GM12878 (cell line): ENCODE measurements at regions of chr1 and their contacts with region 1.

Region 1: DNA sequence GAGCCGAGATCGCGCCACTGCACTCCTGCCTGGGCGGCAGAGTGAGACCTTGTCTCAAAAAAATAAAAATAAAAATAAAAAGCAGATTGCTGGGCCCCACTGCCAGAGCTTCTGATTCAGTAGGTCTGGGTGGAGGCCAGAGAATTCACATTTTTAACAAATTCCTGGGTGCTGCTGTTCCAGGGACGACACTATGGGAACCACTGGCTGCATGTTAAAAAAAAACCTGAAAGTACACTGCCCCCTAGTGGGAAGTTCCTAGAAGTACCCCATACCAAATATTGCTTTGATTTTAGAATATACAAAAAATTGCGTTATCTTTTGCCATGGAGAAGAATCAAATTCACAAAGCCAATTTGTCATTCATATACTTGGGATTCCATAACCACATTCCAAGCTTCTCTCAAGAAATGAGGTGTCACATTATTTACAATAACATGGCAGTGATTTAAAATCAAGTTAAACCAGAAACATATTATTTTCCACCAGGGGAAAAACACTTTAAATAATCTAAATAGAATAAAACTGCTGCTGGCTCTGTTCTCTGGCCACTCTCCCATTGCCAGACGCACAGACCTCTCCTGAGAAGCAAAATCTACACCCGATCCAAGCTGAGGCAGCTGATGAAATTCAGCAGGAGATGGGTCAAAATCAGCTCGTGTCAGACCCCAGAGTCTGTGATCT is 27.4 kb downstream of the SYF2 start:
- DNase-seq: no peak
- ATAC-seq: peak; percentile 77
- H3K4me3 ChIP-seq: no peak overlapping the region
- H3K27ac ChIP-seq: no peak overlapping the region
- H3K4me1 ChIP-seq: no peaks in the 10 kb centered on the region
- H3K27me3 ChIP-seq: peaks cover 0 to 3% of the 10 kb centered on the region in 2 experiments; a peak in 1 of 4 replicates
- CTCF ChIP-seq: peak; percentile 56 to 65 (median 64)
- EP300 ChIP-seq: no peak
- POLR2A ChIP-seq: no peak
- RAD21 ChIP-seq: peak; percentile 79

Region 2: DNA sequence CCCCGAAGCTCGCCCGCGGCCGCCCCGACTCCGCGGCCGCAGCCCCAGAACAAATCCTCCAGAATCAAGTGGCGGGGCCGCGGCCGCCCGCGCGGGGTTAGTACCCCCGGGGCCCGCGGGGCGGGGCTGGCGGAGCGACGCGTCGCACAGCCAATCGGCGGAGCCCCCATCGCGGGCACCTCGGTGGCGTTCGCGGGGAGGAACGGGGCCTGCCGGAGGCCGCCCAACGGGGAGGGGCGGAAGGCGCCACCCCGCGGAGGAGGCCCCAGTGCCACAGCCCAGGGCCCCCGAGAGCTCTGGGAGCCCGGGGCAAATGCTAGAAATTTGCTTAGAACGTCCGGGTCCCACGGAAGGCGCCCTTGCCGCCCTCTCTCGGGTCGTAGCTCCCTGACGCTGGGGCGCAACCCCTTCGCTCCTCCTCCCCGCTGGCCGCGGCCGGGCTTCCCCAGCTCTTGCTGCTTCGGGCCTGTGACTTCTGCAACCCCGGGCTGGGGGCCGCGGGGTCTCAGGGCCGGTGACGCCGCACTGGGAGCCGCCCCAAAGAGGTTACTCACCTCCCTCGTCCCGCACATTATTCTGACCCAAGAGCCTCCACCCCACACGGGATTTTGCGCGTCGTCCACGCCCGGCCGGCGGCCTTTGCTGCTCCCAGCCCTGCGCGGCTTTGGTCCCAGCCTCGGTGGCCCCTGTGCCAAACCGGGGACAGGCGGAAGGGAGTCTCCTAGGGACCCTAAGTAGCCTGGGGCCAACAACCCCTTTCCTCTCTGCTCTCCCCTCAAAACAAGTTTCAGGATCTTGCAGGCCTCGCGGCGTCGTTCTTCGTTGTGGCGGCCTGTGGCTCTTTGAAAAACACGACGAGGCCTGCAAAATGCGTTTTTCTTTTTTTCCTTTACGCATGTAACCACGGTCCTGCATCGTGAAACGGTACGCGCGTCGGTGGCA is 274.5 kb before region 1 on chr1 and contains the start of gene RUNX3:
- CTCF ChIA-PET with region 1: interaction called, 5 read pairs
- POLR2A ChIA-PET with region 1: interaction called, 4 read pairs
- RAD21 ChIA-PET with region 1: interaction called, 4 read pairs
- SMC1A ChIA-PET with region 1: interaction called, 4 read pairs
- in situ Hi-C with region 1: no loop called
- intact Hi-C with region 1: loop called (anchors 10 kb)
- DNase-seq: peak; percentile 76
- ATAC-seq: peak; percentile 77
- H3K4me3 ChIP-seq: peak within 1 kb of the TSS; percentile 99
- H3K27ac ChIP-seq: peak within 1 kb of the TSS; percentile 89
- H3K4me1 ChIP-seq: peaks cover 40% of the 10 kb centered on the region
- H3K27me3 ChIP-seq: no peaks in the 10 kb centered on the region
- CTCF ChIP-seq: peak; percentile 14 to 45 (median 35); a peak in 3 of 6 replicates
- EP300 ChIP-seq: peak in 1 of 2 experiments; percentile 39; a peak in 1 of 4 replicates
- POLR2A ChIP-seq: peak; percentile 11; the same call in 1 of the 2 replicates
- RAD21 ChIP-seq: no peak
- polyA plus RNA-seq, gene RUNX3: 21.6 to 26.3 TPM

Region 3: GRCh38 chr1:25117233-25117823 is 87.6 kb before region 1 on chr1:
- CTCF ChIA-PET with region 1: interaction called, 7 read pairs
- POLR2A ChIA-PET with region 1: no interaction called
- RAD21 ChIA-PET with region 1: no interaction called
- SMC1A ChIA-PET with region 1: interaction called, 3 read pairs
- in situ Hi-C with region 1: no loop called
- intact Hi-C with region 1: loop called (anchors 10 kb)
- DNase-seq: no peak
- ATAC-seq: peak; percentile 78
- H3K4me3 ChIP-seq: no peak overlapping the region
- H3K27ac ChIP-seq: no peak overlapping the region
- H3K4me1 ChIP-seq: 0 out of 2 replicates have a peak, but pooled peaks cover 4% of the 10 kb centered on the region
- H3K27me3 ChIP-seq: no peaks in the 10 kb centered on the region
- CTCF ChIP-seq: peak in 2 of 3 experiments; percentile 27 to 51; a peak in 4 of 6 replicates
- EP300 ChIP-seq: no peak
- POLR2A ChIP-seq: no peak
- RAD21 ChIP-seq: 0 out of 2 replicates have a peak, but pooled peaks have one; percentile 21

Region 4: GRCh38 chr1:25148673-25149300 is 56.2 kb before region 1 on chr1:
- CTCF ChIA-PET with region 1: interaction called, 18 read pairs
- POLR2A ChIA-PET with region 1: no interaction called
- RAD21 ChIA-PET with region 1: interaction called, 4 read pairs
- SMC1A ChIA-PET with region 1: interaction called, 4 read pairs
- in situ Hi-C with region 1: no loop called
- intact Hi-C with region 1: no loop called
- DNase-seq: no peak
- ATAC-seq: peak; percentile 78
- H3K4me3 ChIP-seq: no peak overlapping the region
- H3K27ac ChIP-seq: no peak overlapping the region
- H3K4me1 ChIP-seq: peaks cover 12% of the 10 kb centered on the region
- H3K27me3 ChIP-seq: peaks cover 2 to 12% of the 10 kb centered on the region in 2 experiments
- CTCF ChIP-seq: peak; percentile 61 to 81 (median 67)
- EP300 ChIP-seq: no peak
- POLR2A ChIP-seq: no peak
- RAD21 ChIP-seq: peak; percentile 82

Region 5: GRCh38 chr1:25217598-25218232 is 12.8 kb after region 1 on chr1:
- CTCF ChIA-PET with region 1: interaction called, 31 read pairs
- POLR2A ChIA-PET with region 1: no interaction called
- RAD21 ChIA-PET with region 1: interaction called, 4 read pairs
- SMC1A ChIA-PET with region 1: interaction called, 11 read pairs
- in situ Hi-C with region 1: no loop called
- intact Hi-C with region 1: no loop called
- DNase-seq: no peak
- ATAC-seq: no peak
- H3K4me3 ChIP-seq: no peak overlapping the region
- H3K27ac ChIP-seq: no peak overlapping the region
- H3K4me1 ChIP-seq: no peaks in the 10 kb centered on the region
- H3K27me3 ChIP-seq: no peaks in the 10 kb centered on the region
- CTCF ChIP-seq: no peak
- EP300 ChIP-seq: no peak
- POLR2A ChIP-seq: no peak
- RAD21 ChIP-seq: 0 out of 2 replicates have a peak, but pooled peaks have one; percentile 13

Region 6: GRCh38 chr1:25360596-25361581 is 155.9 kb after region 1 on chr1:
- CTCF ChIA-PET with region 1: no interaction called
- POLR2A ChIA-PET with region 1: no interaction called
- RAD21 ChIA-PET with region 1: no interaction called
- SMC1A ChIA-PET with region 1: no interaction called
- in situ Hi-C with region 1: no loop called
- intact Hi-C with region 1: no loop called
- DNase-seq: no peak
- ATAC-seq: no peak
- H3K4me3 ChIP-seq: no peak overlapping the region
- H3K27ac ChIP-seq: no peak overlapping the region
- H3K4me1 ChIP-seq: no peaks in the 10 kb centered on the region
- H3K27me3 ChIP-seq: no peaks in the 10 kb centered on the region
- CTCF ChIP-seq: no peak
- EP300 ChIP-seq: no peak
- POLR2A ChIP-seq: no peak
- RAD21 ChIP-seq: no peak